ENCODE measurements at regions of chr20 and their contacts with region 1.

Region 1: GRCh38 chr20:62136283-62137091 is 6.7 kb downstream of the PSMA7 start:
- DNase-seq: peak in 3 of 5 donors; percentile 64 to 81 (median 72)
- H3K4me3 ChIP-seq: no peak overlapping the region
- H3K27ac ChIP-seq: no peak overlapping the region
- H3K4me1 ChIP-seq: peaks cover 0 to 11% (median 7%) of the 10 kb centered on the region in 3 donors
- H3K27me3 ChIP-seq: no peaks in the 10 kb centered on the region
- CTCF ChIP-seq: peak; percentile 67

Region 2: DNA sequence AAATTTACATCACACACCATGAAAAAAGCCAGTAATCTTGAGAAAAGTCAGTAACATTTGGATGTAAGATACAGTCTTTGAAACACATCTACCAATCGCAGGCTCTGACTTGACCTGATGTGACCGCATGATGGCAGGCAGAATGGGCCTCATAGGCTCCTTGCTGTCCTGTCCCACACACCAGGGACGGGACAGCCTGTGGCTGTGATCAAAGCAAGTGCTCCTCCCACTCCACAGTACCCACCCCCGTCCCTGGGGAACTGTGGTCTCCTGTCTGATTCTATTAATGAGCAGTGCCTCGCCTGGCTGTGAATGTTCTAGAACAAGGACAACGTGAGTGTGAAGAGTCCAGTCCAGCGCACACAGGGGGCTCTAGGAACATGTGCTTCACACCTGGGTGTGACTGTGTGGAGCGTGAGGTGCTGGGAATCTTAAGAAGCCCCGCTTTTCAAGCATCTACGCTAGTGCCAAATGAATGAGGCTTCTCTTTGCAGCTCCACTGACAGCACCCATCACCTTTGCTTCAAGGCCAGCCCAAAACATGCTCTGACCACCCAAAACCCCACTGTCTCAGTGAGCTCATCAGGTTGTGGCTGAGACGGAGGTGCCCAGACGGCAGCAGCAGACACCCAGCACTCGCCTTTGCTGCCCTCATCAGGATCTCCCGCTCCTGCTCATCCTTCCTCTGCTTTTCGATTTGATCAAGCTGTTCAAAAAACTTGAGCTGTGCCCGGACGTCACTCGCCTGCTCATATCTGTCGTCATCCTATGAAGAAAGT is 138.0 kb before region 1 on chr20:
- intact Hi-C with region 1: no loop called
- DNase-seq: peak in 1 of 5 donors; percentile 41
- H3K4me3 ChIP-seq: no peak overlapping the region
- H3K27ac ChIP-seq: no peak overlapping the region
- H3K4me1 ChIP-seq: no peaks in the 10 kb centered on the region
- H3K27me3 ChIP-seq: no peaks in the 10 kb centered on the region
- CTCF ChIP-seq: no peak

Region 3: DNA sequence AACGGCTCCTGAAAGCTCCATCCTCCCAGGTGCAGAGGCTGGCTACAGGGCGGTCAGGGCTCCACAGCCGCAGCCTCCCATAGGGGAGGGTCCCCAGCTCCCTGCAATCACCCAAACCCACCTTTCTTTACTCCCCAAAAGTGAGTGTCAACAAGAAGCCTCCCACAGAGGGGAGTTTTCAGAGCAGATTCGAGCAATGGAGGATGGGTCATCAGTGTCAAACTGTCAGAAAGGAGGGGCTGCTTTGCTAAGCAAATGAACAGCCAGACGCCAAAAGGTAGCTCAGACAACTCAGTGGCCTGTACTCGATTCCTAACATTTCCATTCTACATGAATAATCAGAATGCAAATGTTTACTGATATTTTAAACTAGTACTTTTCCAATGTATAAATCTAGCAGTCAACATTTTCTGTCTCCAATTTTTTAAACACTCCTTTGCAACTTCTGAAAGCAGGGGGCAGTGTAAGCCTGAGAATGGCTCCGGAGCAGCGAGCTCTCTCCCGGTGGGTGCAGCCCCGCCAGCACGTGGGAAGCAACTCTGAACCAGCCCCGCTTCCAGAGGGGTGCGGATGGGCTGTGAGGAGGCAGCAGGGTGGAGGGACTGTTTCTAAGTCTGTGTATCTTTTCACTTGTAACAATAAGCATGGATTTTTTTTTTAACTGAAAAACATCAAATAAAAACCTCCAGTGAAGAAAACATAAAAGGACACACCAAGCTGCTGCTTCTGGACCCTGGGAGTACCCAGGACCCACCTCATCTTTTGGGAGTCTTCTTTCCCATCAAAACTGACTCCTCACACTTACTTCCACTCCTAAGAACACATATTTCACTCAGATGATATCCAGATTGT is 125.7 kb before region 1 on chr20:
- intact Hi-C with region 1: loop called (anchors 10 kb)
- DNase-seq: peak in 4 of 5 donors; percentile 51 to 73 (median 67)
- H3K4me3 ChIP-seq: no peak overlapping the region
- H3K27ac ChIP-seq: no peak overlapping the region
- H3K4me1 ChIP-seq: peaks cover 0 to 4% (median 0%) of the 10 kb centered on the region in 3 donors
- H3K27me3 ChIP-seq: no peaks in the 10 kb centered on the region
- CTCF ChIP-seq: peak; percentile 55

Region 4: DNA sequence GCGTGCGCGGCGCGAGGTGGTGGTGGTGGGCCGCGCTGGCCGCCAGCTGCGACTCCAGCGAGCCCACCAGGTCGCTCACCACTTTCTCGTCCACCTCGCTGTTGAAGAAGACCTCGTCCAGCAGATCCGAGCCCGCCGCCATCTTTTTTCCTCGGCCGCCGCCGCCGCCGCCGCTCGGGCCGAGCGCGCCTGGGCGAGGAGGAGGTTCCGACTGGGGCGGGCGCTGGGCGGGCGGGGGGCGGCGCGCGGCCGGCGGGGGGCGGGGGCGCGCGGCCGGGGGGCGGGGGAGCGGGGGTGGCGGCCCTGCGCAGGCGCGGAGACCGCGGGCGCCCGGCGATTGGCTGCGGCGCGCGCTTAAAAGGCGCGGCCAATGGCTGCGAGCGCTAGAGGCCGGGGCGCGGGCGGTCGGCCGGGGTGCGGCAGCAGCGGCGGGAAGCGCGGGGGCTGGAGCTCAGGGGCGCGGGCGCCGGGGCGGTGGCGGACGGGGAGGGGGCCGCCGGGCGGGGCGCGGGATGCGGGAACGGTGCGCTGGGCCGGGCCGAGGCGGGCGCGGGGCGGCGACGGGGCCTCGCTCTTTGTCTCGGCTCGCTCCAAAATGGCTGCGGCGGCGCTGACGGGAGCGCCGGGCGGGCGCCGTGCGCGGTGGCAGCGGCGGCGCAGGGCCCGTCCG is 70.7 kb before region 1 on chr20 and contains the start of gene TAF4:
- intact Hi-C with region 1: loop called (anchors 10 kb)
- DNase-seq: peak; percentile 75 to 92 (median 88)
- H3K4me3 ChIP-seq: peak within 1 kb of the TSS; percentile 54 to 62 (median 57)
- H3K27ac ChIP-seq: peak within 1 kb of the TSS; percentile 83 to 86
- H3K4me1 ChIP-seq: peaks cover 2 to 38% (median 18%) of the 10 kb centered on the region in 3 donors
- H3K27me3 ChIP-seq: no peaks in the 10 kb centered on the region
- CTCF ChIP-seq: no peak
- total RNA-seq, gene TAF4: 18.4 TPM

Measured in kidney (tissue), 22 donors.